MCF 10A (cell line): ENCODE measurements at regions of chr1 and their contacts with region 1.

Region 1: GRCh38 chr1:15678578-15678977 is 5.5 kb upstream of the PLEKHM2 start:
- DNase-seq: peak; percentile 51
- H3K4me3 Mint-ChIP-seq: no peak overlapping the region
- H3K27ac Mint-ChIP-seq: no peak overlapping the region
- H3K4me1 Mint-ChIP-seq: peaks cover 34% of the 10 kb centered on the region
- H3K27me3 Mint-ChIP-seq: no peaks in the 10 kb centered on the region
- CTCF ChIP-seq: no peak

Region 2: DNA sequence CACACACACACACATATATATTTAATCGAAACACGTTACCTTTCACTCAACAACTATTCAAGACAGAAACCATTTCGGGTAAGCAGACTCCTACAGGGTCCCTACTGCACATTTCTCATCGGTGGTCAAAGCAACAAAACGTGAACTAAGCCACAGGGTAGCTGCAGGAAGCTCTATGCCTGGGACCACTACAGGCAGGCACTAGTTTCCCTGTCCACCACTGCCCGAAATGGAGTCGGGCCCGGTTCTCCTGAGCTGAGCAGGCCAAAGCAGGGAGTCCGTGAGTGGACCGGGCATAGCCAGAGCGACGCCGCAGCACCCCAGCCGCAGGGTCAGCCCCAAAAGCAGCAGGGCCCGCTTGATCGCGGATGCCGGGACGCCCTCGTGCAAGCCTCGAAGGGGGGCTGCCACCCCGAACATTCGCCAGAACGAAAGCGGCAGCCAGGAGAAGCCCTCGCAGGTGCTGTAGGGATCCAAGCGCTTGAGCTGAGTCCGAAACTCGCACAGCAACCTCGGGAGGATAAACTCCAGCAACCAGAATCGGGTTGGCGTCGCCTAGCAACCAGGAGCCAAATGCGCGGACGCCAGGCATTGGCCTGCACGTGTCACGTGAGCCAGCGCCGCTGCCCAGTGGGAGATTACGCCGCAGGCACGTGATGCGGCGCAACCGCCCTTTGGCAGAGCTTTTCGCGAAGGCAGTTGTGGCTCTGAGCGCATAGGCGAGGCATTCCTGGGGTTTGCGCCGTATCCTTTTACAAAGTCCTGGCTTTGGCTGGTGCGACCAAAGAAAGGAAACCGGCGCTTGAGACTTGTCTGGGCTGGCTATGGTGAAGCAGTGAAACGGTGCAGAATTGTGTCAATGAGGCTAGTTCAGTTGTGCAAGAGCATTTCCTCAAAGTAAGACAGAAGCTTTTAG is 75.3 kb before region 1 on chr1:
- CTCF ChIA-PET with region 1: interaction called, 3 read pairs
- POLR2A ChIA-PET with region 1: interaction called, 21 read pairs
- intact Hi-C with region 1: no loop called
- DNase-seq: peak; percentile 95
- H3K4me3 Mint-ChIP-seq: peak overlapping the region; percentile 82
- H3K27ac Mint-ChIP-seq: peak overlapping the region; percentile 67
- H3K4me1 Mint-ChIP-seq: peaks cover 6% of the 10 kb centered on the region
- H3K27me3 Mint-ChIP-seq: no peaks in the 10 kb centered on the region
- CTCF ChIP-seq: no peak

Region 3: DNA sequence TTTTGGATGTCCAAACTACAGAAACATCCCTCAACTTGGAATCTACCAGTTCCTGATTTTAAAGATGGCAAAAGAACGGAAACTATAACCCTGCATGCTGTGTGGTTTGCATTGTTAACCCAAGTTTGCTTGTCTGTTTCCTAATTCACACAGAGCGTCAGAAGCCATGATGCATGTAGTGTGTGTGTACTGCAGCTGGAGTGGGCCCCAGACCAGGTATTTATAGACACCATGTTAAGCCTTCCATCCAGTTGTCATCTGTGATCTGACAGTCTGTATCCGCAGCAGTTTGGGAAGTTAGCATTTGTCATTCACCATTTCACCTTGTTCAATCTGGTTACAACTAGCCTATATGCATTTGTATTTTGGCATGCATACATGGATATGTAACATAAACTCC is 22.1 kb before region 1 on chr1:
- CTCF ChIA-PET with region 1: no interaction called
- POLR2A ChIA-PET with region 1: interaction called, 29 read pairs
- intact Hi-C with region 1: no loop called
- DNase-seq: no peak
- H3K4me3 Mint-ChIP-seq: no peak overlapping the region
- H3K27ac Mint-ChIP-seq: no peak overlapping the region
- H3K4me1 Mint-ChIP-seq: no peaks in the 10 kb centered on the region
- H3K27me3 Mint-ChIP-seq: no peaks in the 10 kb centered on the region
- CTCF ChIP-seq: no peak

Region 4: DNA sequence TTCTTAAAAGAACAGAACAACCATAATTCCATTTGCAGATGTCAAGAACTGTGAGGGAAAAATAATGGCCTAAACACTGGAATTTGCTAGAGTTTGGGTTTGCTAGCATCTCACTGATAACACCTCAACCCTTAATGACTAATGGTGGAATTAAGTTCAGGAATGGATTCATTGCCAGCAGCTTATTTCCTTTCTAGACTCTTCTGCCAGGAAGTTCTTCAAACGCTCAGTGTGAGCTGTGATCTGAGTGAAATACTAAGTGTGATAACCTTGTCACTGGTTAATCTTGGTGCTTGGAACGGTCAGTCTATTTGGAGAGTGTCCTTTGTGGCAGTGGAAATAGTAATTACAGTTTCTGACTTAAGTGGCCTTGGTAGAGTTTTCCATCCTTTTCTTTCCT is 16.1 kb before region 1 on chr1:
- CTCF ChIA-PET with region 1: no interaction called
- POLR2A ChIA-PET with region 1: interaction called, 13 read pairs
- intact Hi-C with region 1: no loop called
- DNase-seq: no peak
- H3K4me3 Mint-ChIP-seq: no peak overlapping the region
- H3K27ac Mint-ChIP-seq: no peak overlapping the region
- H3K4me1 Mint-ChIP-seq: no peaks in the 10 kb centered on the region
- H3K27me3 Mint-ChIP-seq: no peaks in the 10 kb centered on the region
- CTCF ChIP-seq: no peak

Region 5: GRCh38 chr1:15703562-15703961 is 25.0 kb after region 1 on chr1:
- CTCF ChIA-PET with region 1: interaction called, 7 read pairs
- POLR2A ChIA-PET with region 1: interaction called, 24 read pairs
- intact Hi-C with region 1: no loop called
- DNase-seq: peak; percentile 86
- H3K4me3 Mint-ChIP-seq: peak overlapping the region; percentile 29
- H3K27ac Mint-ChIP-seq: peak overlapping the region; percentile 96
- H3K4me1 Mint-ChIP-seq: peaks cover 20% of the 10 kb centered on the region
- H3K27me3 Mint-ChIP-seq: no peaks in the 10 kb centered on the region
- CTCF ChIP-seq: no peak